MCF 10A (cell line): ENCODE measurements at regions of chr3 and their contacts with region 1.

Region 1: GRCh38 chr3:4712143-4712542 is 219.0 kb downstream of the ITPR1 start:
- DNase-seq: peak; percentile 99
- H3K4me3 Mint-ChIP-seq: peak overlapping the region; percentile 42
- H3K27ac Mint-ChIP-seq: peak overlapping the region; percentile 46
- H3K4me1 Mint-ChIP-seq: peaks cover 22% of the 10 kb centered on the region
- H3K27me3 Mint-ChIP-seq: no peaks in the 10 kb centered on the region
- CTCF ChIP-seq: no peak

Region 2: DNA sequence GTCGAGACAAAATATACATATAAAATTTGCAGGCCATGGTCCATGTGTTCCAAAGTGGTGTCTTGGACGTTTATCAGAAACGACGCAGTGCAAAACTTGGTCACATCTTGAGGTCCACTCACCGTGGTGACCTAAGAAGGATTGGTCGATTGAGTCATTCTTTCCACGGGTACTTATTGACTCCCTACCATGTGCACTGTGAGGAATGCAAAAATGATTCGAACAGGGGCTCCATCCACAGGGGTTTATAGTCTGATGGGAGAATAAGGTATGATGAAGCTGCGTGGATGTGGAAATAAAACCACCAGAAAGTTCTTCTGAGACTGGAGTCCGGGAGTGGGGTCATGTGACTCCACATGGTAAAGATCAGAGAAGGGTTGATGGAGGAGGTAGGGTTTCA is 33.8 kb before region 1 on chr3:
- CTCF ChIA-PET with region 1: interaction called, 10 read pairs
- POLR2A ChIA-PET with region 1: no interaction called
- intact Hi-C with region 1: no loop called
- DNase-seq: no peak
- H3K4me3 Mint-ChIP-seq: no peak overlapping the region
- H3K27ac Mint-ChIP-seq: no peak overlapping the region
- H3K4me1 Mint-ChIP-seq: peaks cover 5% of the 10 kb centered on the region
- H3K27me3 Mint-ChIP-seq: no peaks in the 10 kb centered on the region
- CTCF ChIP-seq: no peak

Region 3: GRCh38 chr3:4978204-4978965 is 266.2 kb after region 1 on chr3:
- CTCF ChIA-PET with region 1: interaction called, 53 read pairs
- POLR2A ChIA-PET with region 1: interaction called, 49 read pairs
- intact Hi-C with region 1: loop called (anchors 1 kb)
- DNase-seq: peak; percentile 99
- H3K4me3 Mint-ChIP-seq: peak overlapping the region; percentile 94
- H3K27ac Mint-ChIP-seq: peak overlapping the region; percentile 93
- H3K4me1 Mint-ChIP-seq: peaks cover 26% of the 10 kb centered on the region
- H3K27me3 Mint-ChIP-seq: no peaks in the 10 kb centered on the region
- CTCF ChIP-seq: no peak

Region 4: DNA sequence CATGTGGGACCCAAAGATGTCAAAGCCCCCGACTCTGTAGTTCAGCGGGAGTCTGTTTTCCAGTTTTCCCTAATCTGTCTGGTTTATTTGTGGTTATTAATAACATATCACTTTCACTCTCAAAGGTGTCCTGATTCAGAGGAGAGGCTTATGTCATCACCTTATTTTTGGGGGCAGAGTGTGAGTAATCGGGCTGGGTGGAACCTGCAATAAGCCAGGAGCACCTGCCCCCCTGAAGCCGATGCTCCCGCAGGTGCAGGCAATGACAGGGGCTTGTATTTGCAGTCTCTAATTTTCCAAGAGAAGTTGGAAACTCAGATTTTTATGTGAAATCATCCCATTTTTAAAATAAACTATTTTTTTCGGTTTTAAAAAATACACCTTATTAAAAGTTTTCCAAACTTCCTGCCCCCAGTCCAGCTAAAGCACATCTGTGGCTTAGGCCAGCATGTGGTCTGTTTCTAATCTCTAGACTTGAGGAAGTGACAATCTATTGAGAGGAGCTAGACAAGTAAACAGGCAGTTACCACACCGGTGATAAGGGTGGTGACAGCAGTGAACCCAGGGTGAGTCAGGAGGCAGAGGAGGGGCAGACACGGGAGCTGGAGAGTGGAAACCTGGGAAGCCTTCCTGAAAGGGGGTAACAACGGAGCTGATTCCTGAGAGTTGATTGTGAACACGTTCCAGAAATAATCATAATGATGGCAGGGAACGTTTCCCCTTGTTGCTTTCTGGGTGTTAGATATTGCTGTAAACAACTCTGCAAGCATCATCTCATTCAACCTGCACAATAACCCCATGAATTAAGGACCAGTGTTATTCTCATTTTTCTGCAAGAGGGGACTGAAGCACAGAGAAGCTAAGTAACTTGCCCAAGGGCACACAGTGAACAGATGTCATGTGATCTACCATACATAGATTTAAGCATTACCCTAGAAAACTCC is 304.3 kb after region 1 on chr3:
- CTCF ChIA-PET with region 1: interaction called, 141 read pairs
- POLR2A ChIA-PET with region 1: interaction called, 4 read pairs
- intact Hi-C with region 1: no loop called
- DNase-seq: peak; percentile 59
- H3K4me3 Mint-ChIP-seq: no peak overlapping the region
- H3K27ac Mint-ChIP-seq: peak overlapping the region; percentile 76
- H3K4me1 Mint-ChIP-seq: peaks cover 55% of the 10 kb centered on the region
- H3K27me3 Mint-ChIP-seq: no peaks in the 10 kb centered on the region
- CTCF ChIP-seq: no peak

Region 5: GRCh38 chr3:5057857-5058324 is 345.7 kb after region 1 on chr3:
- CTCF ChIA-PET with region 1: interaction called, 89 read pairs
- POLR2A ChIA-PET with region 1: interaction called, 24 read pairs
- intact Hi-C with region 1: loop called (anchors 1 kb)
- DNase-seq: peak; percentile 89
- H3K4me3 Mint-ChIP-seq: no peak overlapping the region
- H3K27ac Mint-ChIP-seq: no peak overlapping the region
- H3K4me1 Mint-ChIP-seq: peaks cover 22% of the 10 kb centered on the region
- H3K27me3 Mint-ChIP-seq: peaks cover 11% of the 10 kb centered on the region
- CTCF ChIP-seq: peak; percentile 68

Region 6: GRCh38 chr3:5078151-5078550 is 366.0 kb after region 1 on chr3:
- CTCF ChIA-PET with region 1: interaction called, 22 read pairs
- POLR2A ChIA-PET with region 1: no interaction called
- intact Hi-C with region 1: no loop called
- DNase-seq: peak; percentile 89
- H3K4me3 Mint-ChIP-seq: no peak overlapping the region
- H3K27ac Mint-ChIP-seq: peak overlapping the region; percentile 27
- H3K4me1 Mint-ChIP-seq: peaks cover 5% of the 10 kb centered on the region
- H3K27me3 Mint-ChIP-seq: no peaks in the 10 kb centered on the region
- CTCF ChIP-seq: no peak

Region 7: DNA sequence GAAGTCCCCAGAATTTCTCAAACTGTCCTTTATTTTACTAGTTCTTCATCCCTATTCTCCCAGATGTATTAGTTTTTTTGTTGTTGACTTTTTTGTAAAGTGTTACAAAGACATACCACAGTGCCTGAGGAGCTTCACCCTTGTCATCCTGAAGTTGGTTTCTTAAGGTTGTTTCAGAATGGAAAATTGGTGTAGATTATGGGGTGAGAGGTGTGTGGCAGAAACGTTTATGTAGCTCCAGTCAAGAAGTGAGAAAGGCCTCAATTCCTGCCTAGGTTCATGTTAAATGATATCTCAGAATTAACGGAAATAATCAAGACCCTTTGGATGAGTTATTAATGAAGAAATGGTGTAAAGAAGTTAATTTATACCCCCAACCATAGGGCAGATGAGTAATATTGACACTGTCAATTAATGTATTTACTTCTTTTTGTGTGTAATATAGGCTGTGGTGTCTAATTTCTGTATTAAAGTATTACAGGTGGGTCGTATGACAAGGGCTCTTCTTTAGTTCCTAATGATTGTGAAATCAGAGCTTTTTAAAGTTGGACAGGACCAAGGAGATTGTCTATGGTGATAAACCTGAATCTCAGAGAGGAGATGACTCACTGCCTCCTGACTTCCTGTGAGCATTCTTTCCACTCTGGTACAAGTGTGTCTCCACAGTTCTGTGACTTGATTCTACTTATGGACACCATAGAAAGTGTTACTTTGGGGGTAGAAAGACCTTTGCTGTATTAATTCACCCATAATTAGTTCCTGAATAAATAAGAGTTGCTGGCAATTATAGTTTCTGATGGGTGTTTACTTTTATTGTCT is 482.4 kb after region 1 on chr3:
- CTCF ChIA-PET with region 1: interaction called, 11 read pairs
- POLR2A ChIA-PET with region 1: interaction called, 4 read pairs
- intact Hi-C with region 1: loop called (anchors 5 kb)
- DNase-seq: peak; percentile 91
- H3K4me3 Mint-ChIP-seq: peak overlapping the region; percentile 52
- H3K27ac Mint-ChIP-seq: peak overlapping the region; percentile 95
- H3K4me1 Mint-ChIP-seq: peaks cover 74% of the 10 kb centered on the region
- H3K27me3 Mint-ChIP-seq: no peaks in the 10 kb centered on the region
- CTCF ChIP-seq: no peak